ENCODE measurements at regions of chr3 and their contacts with region 1.

Region 1: DNA sequence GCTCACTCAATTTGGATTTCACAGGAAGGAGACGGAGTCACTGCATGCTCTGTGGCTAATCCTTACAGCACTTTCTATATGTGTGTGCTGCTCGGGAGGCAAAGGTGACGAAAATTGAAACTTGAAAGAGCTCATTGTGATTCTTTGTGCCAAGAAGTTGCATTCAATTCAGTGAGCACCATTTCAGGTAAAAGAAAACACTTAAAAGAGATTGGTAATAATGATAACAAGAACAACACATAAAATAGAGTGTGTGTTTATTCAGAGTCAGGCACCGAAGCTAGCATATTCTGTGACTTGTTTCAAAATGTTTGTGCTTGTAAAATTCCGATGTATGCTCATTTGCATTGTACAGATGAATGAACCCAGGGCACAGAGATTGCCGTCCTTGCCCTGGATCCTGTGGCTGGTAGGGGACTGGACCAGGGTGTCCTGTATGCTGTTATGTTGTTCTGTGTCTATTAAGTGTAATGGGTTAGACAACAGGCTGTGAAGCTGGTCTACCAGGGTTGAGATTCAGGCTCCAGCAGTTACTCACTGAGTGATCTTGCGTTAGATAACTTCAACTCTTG is 193.3 kb upstream of the PROK2 start:
- DNase-seq: no peak
- H3K4me3 ChIP-seq: no peak overlapping the region
- H3K27ac ChIP-seq: no peak overlapping the region
- H3K4me1 ChIP-seq: peaks cover 22% of the 10 kb centered on the region
- H3K27me3 ChIP-seq: no peaks in the 10 kb centered on the region
- CTCF ChIP-seq: no peak

Region 2: GRCh38 chr3:71548705-71549384 is 429.4 kb before region 1 on chr3:
- CTCF ChIA-PET with region 1: no interaction called
- dilution Hi-C with region 1: no loop called
- in situ Hi-C with region 1: no loop called
- intact Hi-C with region 1: no loop called
- DNase-seq: no peak
- H3K4me3 ChIP-seq: no peak overlapping the region
- H3K27ac ChIP-seq: no peak overlapping the region
- H3K4me1 ChIP-seq: peaks cover 10% of the 10 kb centered on the region
- H3K27me3 ChIP-seq: no peaks in the 10 kb centered on the region
- CTCF ChIP-seq: no peak

Region 3: DNA sequence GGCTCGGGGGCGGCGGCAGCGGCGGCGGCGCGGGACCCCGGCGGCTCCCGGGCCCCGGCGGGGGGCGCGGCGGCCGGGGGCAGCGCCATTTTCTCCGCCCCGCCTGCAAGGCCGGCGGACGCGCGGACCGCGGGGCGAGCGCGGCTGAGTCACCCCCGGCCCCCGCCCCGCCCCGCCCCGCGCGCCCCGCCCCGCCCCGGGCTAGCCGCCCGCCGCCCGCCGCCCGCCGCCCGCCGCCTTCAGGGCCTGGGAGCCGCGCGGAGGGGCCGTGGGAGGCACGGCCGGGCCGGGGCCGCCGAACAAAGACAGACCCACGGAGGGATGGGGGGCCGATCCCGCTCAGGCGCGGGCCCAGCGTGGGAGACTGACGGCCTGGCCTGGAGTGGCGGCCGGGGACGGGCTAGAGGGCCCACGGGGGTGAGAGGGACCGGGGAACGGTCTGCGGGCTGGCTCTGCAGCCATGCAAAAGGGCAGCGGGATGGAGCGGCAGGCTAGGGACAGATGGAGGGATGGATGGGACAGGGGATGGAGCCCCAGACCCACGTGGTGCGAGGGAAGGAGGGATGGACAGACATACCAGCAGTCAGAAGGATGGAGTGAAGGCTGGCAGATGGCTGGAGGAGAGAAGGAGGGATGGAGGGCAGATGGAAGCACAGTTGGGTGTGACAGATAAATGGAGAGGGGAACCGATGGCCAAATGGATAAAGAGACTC is 252.8 kb before region 1 on chr3 and contains the start of gene EIF4E3:
- CTCF ChIA-PET with region 1: no interaction called
- dilution Hi-C with region 1: no loop called
- in situ Hi-C with region 1: no loop called
- intact Hi-C with region 1: no loop called
- DNase-seq: no peak
- H3K4me3 ChIP-seq: peak within 1 kb of the TSS; percentile 46 to 86 (median 72)
- H3K27ac ChIP-seq: no peak within 1 kb of the TSS
- H3K4me1 ChIP-seq: peaks cover 7% of the 10 kb centered on the region
- H3K27me3 ChIP-seq: no peaks in the 10 kb centered on the region
- CTCF ChIP-seq: no peak
- total RNA-seq, gene EIF4E3: 3.7 to 6.3 TPM

Region 4: DNA sequence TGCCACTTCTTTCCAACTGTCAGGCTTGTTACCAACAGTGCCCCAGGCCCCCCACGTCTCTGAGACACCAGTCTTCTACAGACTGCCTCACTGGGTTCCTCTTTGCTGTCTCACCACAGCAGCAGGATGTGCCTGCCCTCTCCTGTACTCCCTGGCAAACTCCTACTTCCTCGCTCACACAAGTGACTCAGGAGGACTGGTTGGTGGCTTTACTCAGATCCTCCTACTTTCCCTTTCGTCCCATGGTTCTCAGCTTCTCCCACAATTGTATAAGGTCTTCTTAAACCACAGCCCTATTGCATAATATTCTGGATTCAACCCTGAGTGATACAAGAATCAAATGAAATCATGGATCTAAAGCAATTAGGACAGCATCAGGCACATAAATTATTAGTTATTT is 53.3 kb after region 1 on chr3:
- CTCF ChIA-PET with region 1: no interaction called
- dilution Hi-C with region 1: no loop called
- in situ Hi-C with region 1: no loop called
- intact Hi-C with region 1: no loop called
- DNase-seq: peak; percentile 79
- H3K4me3 ChIP-seq: no peak overlapping the region
- H3K27ac ChIP-seq: peak overlapping the region; percentile 5
- H3K4me1 ChIP-seq: peaks cover 26% of the 10 kb centered on the region
- H3K27me3 ChIP-seq: no peaks in the 10 kb centered on the region
- CTCF ChIP-seq: peak; percentile 24 to 40

Region 5: DNA sequence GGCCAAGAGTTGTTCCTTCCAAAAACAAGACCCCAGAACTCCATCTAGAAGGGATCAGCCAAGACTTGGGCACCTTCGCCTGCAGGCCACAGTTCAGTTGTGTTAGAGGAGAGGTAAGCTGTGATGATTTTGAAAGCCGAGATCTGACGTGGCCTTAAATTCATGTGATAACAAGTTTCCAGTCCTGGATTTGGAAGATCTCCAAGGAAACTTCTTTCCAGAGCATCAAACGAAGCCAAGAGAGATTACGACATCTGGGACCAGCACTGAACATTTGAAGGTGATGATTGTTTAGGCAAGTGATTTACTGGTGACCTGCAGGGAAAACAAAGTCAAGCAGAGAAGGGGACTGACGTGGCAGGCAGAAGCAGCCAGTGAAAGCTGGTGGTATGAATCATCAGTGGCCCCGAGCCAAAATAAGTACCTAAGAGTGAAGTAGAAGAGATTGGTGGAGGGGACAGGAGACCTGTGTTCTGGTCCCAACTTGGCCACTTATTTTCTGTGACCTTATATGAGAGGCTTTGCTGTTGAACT is 145.7 kb after region 1 on chr3:
- CTCF ChIA-PET with region 1: no interaction called
- dilution Hi-C with region 1: no loop called
- in situ Hi-C with region 1: no loop called
- intact Hi-C with region 1: loop called (anchors 10 kb)
- DNase-seq: peak; percentile 99
- H3K4me3 ChIP-seq: no peak overlapping the region
- H3K27ac ChIP-seq: peak overlapping the region; percentile 20
- H3K4me1 ChIP-seq: peaks cover 13% of the 10 kb centered on the region
- H3K27me3 ChIP-seq: no peaks in the 10 kb centered on the region
- CTCF ChIP-seq: no peak